Activated CD4-positive, alpha-beta T cell treated with anti-CD3 and anti-CD28 coated beads, Interleukin-2, amount 10 ng/mL, durations not matched to agents 24 days and 14 days (primary cell): ENCODE measurements at regions of chr12 and their contacts with region 1.

Region 1: DNA sequence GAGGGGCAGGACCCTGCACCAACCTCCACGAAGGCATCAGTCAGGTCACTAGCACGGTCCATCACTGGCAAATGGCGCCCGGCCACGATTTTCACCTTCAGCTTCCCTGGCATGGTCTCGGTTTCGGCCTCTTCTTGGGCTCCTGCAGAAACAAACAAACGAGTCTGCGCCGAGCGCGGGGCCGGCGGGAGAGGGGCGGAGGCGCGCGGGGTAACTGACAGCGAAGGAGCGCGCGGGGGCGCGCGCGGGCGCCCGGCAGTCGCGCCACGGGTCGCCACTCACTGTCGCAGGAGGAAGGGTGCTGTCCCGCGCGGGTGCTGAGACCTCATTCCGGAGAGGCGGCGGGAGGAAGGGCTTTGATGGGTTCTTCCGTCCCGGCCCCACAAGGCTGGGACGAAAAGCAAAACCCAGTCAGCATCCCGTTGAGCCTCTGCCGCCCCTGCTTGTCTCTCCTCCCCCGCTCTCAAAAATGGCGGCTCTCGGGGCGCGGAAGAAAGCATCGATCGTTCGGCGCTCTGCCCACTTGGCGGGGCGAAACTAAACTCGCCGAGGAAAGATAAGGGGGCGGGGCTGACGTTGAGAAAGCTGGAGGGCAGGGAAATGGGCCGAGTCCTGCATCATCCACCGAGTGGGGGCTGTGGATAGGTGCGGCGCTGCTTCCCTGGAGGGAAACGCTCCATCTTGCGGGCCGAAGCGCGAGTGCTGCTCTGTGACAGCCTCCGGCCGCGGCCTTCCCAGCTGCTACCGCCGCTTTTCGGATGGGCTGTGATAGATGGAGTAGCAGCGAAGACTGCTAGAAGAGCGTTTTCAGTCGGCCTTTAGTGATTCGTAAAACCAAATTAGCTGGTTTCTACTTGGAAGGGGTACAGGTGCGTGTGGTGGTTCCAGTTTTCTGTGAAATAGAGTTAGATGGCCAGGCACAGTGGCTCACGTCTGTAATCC is at the start of gene C2CD5:
- DNase-seq: peak; percentile 98
- H3K4me3 Mint-ChIP-seq: peak within 1 kb of the TSS; percentile 92
- H3K27ac Mint-ChIP-seq: peak within 1 kb of the TSS; percentile 97
- H3K4me1 Mint-ChIP-seq: peaks cover 34% of the 10 kb centered on the region
- H3K27me3 Mint-ChIP-seq: peaks cover 16% of the 10 kb centered on the region
- total RNA-seq, gene C2CD5: 31.4 and 35.1 TPM in 2 replicates

Region 2: DNA sequence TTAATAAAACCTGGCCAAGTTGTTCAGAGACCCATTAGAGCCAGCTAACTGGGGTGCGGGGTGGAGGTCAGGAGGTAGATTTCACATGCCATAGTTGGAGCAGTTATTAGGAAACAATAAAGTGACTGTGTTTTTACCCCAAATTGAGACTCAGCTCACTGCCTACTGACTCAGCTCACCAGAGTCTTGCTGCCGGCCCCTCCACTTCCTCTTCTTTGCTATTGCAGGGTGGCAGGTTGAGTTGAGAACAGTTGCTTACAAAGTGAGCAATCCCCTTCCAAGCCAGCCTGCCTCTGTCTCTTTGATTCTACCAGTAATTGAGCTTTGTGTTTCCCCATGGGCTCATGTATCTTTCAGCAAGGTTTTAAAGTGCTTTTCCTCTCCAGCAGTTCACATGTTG is 222.7 kb before region 1 on chr12:
- intact Hi-C with region 1: no loop called
- DNase-seq: no peak
- H3K4me3 Mint-ChIP-seq: no peak overlapping the region
- H3K27ac Mint-ChIP-seq: no peak overlapping the region
- H3K4me1 Mint-ChIP-seq: no peaks in the 10 kb centered on the region
- H3K27me3 Mint-ChIP-seq: no peaks in the 10 kb centered on the region

Region 3: DNA sequence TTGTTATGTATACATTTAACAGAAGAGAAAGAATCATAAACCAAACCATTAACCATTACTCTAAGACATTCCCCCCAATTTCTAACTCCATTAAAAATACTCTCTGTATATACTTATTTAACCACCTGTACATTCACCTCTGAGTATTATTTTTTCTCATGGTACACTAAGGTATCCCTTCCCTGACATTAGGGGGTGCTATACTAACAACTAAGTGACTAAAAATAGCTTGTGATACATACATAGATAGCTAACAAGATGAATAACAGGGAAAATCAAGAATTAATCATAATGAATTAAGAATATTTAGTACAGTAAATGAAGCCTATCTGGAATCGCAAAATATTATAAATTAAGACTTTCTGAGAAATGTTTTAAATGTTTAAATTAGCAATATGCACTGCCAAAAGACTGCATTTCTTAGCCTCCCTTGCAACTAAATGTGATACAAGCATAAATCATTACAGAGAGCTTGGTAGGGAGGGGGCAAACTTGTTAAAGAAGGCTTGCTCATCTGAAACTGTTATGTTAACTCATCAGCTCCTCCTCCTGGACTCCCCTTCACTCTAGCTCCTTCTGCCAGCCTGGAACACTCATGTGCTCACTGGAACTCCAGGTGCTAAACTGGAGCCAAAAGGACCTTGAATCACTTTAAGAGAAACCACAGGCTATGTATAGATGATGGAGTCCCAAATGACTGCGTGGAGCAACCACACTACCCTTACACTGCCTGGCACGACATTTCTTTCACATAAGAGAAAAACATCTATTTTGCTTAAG is 14.8 kb before region 1 on chr12:
- intact Hi-C with region 1: loop called (anchors 2 kb)
- DNase-seq: no peak
- H3K4me3 Mint-ChIP-seq: no peak overlapping the region
- H3K27ac Mint-ChIP-seq: peak overlapping the region; percentile 66
- H3K4me1 Mint-ChIP-seq: peaks cover 7% of the 10 kb centered on the region
- H3K27me3 Mint-ChIP-seq: no peaks in the 10 kb centered on the region